ENCODE measurements at regions of chr10 and their contacts with region 1.

Region 1: GRCh38 chr10:124722798-124723783 is 21.1 kb downstream of the FAM53B start:
- DNase-seq: peak in 1 of 2 donors; percentile 67
- ATAC-seq: peak; percentile 29 to 67 (median 50)
- H3K4me3 ChIP-seq: peak overlapping the region in 1 of 10 donors; percentile 12
- H3K27ac ChIP-seq: peak overlapping the region; percentile 65 to 90 (median 80)
- H3K4me1 ChIP-seq: peaks cover 42 to 100% (median 99%) of the 10 kb centered on the region in 9 donors
- H3K27me3 ChIP-seq: no peaks in the 10 kb centered on the region
- CTCF ChIP-seq: no peak

Region 2: GRCh38 chr10:124354411-124355382 is 368.4 kb before region 1 on chr10:
- intact Hi-C with region 1: no loop called
- DNase-seq: peak; percentile 32 to 62
- ATAC-seq: peak; percentile 60 to 93 (median 84)
- H3K4me3 ChIP-seq: peak overlapping the region in 9 of 10 donors; percentile 17 to 51 (median 44)
- H3K27ac ChIP-seq: peak overlapping the region in 2 of 10 donors; percentile 17 to 54
- H3K4me1 ChIP-seq: peaks cover 0 to 17% (median 7%) of the 10 kb centered on the region in 9 donors
- H3K27me3 ChIP-seq: peaks cover 0 to 15% (median 4%) of the 10 kb centered on the region in 7 donors
- CTCF ChIP-seq: peak in 1 of 9 donors; percentile 10

Region 3: GRCh38 chr10:124665980-124666379 is 57.1 kb before region 1 on chr10:
- intact Hi-C with region 1: loop called in 1 of 10 experiments (anchors 5 kb)
- DNase-seq: no peak
- ATAC-seq: no peak
- H3K4me3 ChIP-seq: no peak overlapping the region
- H3K27ac ChIP-seq: peak overlapping the region in 3 of 10 donors; percentile 6 to 36 (median 13)
- H3K4me1 ChIP-seq: peaks cover 27 to 85% (median 67%) of the 10 kb centered on the region in 9 donors
- H3K27me3 ChIP-seq: no peaks in the 10 kb centered on the region
- CTCF ChIP-seq: no peak

Measured in heart right ventricle (tissue), 16 donors.